Lower lobe of right lung (tissue), 2 donors: ENCODE measurements at regions of chr10 and their contacts with region 1.

Region 1: DNA sequence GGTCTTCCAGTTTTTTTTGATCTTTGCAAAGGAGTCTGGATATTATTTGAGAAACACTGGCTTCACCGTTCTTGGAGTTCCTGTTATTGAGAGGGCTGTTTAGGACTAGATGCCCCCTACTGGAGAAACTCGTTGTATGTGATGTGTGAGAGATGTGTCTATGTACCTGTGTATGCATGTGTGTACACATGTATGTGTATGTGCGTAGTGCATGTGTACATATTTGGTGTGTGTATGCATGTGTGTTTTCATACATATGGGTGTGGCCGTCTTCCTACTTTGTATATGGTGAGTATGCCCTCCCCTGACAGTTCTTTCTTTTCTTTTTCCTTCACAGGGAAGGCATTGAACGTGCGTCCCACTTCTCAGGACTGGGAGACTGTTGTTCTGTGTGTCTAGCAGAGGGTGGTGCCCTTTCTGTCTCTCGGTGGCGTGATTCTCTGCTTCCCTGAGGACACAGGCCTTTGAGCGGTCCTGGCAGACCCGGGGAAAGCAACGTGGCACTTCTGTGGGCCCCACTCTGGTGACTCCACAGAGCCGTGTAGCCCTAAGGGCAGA is 3.0 kb upstream of the CALHM3 start:
- DNase-seq: no peak
- ATAC-seq: peak; percentile 66
- H3K4me3 ChIP-seq: no peak overlapping the region
- H3K27ac ChIP-seq: no peak overlapping the region
- H3K4me1 ChIP-seq: no peaks in the 10 kb centered on the region
- H3K27me3 ChIP-seq: no peaks in the 10 kb centered on the region
- CTCF ChIP-seq: peak; percentile 68

Region 2: DNA sequence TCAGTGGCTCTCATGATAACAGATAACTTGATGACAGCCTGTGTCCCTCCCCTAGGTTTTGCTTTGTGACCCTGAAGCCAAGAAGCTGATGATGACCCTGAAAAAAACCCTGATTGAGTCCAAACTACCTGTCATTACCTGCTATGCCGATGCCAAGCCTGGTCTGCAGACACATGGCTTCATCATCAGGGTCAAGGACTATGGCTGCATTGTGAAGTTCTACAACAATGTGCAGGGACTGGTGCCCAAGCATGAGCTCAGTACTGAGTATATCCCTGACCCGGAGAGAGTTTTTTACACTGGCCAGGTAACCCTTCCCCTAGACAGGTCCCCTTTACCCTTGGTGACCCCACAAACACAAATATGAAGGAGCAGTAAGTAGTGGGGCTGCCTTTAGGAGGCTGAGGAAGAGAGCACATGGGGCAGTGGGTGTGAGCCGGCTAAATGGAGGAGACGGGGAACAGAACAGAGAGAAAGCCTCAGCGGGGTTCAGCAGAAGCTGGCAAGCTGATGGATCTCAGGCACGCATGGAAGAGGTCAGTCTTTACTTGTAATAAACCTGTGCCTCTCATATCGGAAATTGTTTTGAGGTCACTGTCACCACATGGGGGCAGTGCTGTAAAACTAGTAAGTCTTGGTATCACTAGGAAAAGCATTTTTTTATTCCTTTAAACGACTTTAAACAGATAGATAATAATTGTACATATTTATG is 65.5 kb before region 1 on chr10:
- intact Hi-C with region 1: loop called (anchors 10 kb)
- DNase-seq: no peak
- ATAC-seq: peak; percentile 51 to 54
- H3K4me3 ChIP-seq: no peak overlapping the region
- H3K27ac ChIP-seq: no peak overlapping the region
- H3K4me1 ChIP-seq: no peaks in the 10 kb centered on the region
- H3K27me3 ChIP-seq: no peaks in the 10 kb centered on the region
- CTCF ChIP-seq: peak; percentile 62